Heart left ventricle (tissue), 16 donors: ENCODE measurements at regions of chr2 and their contacts with region 1.

Region 1: GRCh38 chr2:191218292-191218898 is 26.8 kb upstream of the MYO1B start:
- DNase-seq: peak in 4 of 5 donors; percentile 35 to 40 (median 40)
- ATAC-seq: peak in 3 of 4 donors; percentile 60 to 79 (median 66)
- H3K4me3 ChIP-seq: no peak overlapping the region
- H3K27ac ChIP-seq: peak overlapping the region in 2 of 12 donors; percentile 2 to 5
- H3K4me1 ChIP-seq: peaks cover 0 to 32% (median 7%) of the 10 kb centered on the region in 12 donors
- H3K27me3 ChIP-seq: no peaks in the 10 kb centered on the region
- CTCF ChIP-seq: peak; percentile 54 to 77 (median 61)
- POLR2A ChIP-seq: no peak

Region 2: GRCh38 chr2:191178806-191179514 is 39.4 kb before region 1 on chr2:
- intact Hi-C with region 1: loop called in 1 of 10 experiments (anchors 5 kb)
- DNase-seq: peak in 4 of 5 donors; percentile 10 to 68 (median 40)
- ATAC-seq: peak in 3 of 4 donors; percentile 71 to 93 (median 92)
- H3K4me3 ChIP-seq: no peak overlapping the region
- H3K27ac ChIP-seq: peak overlapping the region in 1 of 12 donors; percentile 3
- H3K4me1 ChIP-seq: peaks cover 0 to 8% (median 0%) of the 10 kb centered on the region in 12 donors
- H3K27me3 ChIP-seq: no peaks in the 10 kb centered on the region
- CTCF ChIP-seq: no peak
- POLR2A ChIP-seq: no peak

Region 3: GRCh38 chr2:191465766-191466420 is 247.5 kb after region 1 on chr2:
- intact Hi-C with region 1: no loop called
- DNase-seq: peak in 3 of 5 donors; percentile 27 to 56 (median 32)
- ATAC-seq: peak; percentile 71 to 83 (median 72)
- H3K4me3 ChIP-seq: no peak overlapping the region
- H3K27ac ChIP-seq: peak overlapping the region in 11 of 12 donors; percentile 27 to 80 (median 57)
- H3K4me1 ChIP-seq: peaks cover 0 to 37% (median 13%) of the 10 kb centered on the region in 12 donors
- H3K27me3 ChIP-seq: no peaks in the 10 kb centered on the region
- CTCF ChIP-seq: no peak
- POLR2A ChIP-seq: no peak

Region 4: DNA sequence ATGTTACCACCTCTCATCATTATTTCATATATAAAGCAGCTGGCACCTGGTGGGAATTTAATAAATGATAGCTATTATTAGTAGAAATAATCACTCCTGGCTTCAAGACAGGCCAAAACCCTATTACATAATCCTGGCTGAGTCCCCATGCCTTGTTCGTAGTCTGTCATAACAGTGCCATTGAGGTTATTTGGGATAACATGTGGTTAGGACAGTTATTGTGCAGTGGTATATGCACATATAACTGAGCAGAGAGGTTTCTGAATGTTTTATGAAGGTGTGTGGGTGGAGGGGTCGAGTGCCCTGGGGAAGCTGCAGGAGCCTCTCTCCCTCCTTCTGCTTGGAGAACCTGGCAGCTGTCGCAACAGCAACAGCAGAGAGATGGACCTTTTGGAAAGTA is 297.2 kb after region 1 on chr2:
- intact Hi-C with region 1: loop called in 5 of 10 experiments (anchors 5 kb)
- DNase-seq: no peak
- ATAC-seq: peak in 3 of 4 donors; percentile 31 to 53 (median 33)
- H3K4me3 ChIP-seq: no peak overlapping the region
- H3K27ac ChIP-seq: no peak overlapping the region
- H3K4me1 ChIP-seq: peaks cover 0 to 15% (median 0%) of the 10 kb centered on the region in 12 donors
- H3K27me3 ChIP-seq: no peaks in the 10 kb centered on the region
- CTCF ChIP-seq: no peak
- POLR2A ChIP-seq: no peak

Region 5: DNA sequence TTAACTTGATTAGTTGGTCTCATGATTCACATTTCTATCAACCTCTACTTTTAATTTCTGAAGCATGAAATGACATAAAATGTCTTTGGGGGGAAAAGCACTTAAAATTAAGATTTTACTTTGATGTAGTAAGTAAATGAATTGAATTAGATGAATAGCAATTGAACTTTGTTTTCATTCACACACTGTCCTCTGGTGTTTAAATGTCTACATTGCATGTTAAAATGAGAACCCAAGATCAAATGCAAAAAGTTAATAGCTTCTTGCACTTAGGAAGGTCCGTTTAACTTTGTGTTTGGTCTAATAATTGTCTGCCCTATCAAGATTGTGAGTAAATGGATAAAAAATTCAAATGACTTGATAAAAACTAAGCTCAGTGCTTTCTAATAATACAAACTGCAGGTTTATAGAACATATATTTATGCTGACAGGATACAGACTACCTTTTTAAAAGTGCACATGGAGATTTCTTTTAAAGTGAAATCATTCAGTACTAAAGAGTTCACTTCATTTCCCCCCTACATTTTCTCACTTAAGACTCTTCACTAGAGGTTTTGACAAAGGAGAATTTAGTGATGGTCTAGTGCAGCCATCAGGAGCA is 303.3 kb after region 1 on chr2:
- intact Hi-C with region 1: loop called in 5 of 10 experiments (anchors 5 kb)
- DNase-seq: no peak
- ATAC-seq: no peak
- H3K4me3 ChIP-seq: no peak overlapping the region
- H3K27ac ChIP-seq: no peak overlapping the region
- H3K4me1 ChIP-seq: no peaks in the 10 kb centered on the region
- H3K27me3 ChIP-seq: no peaks in the 10 kb centered on the region
- CTCF ChIP-seq: peak; percentile 72 to 93 (median 80)
- POLR2A ChIP-seq: no peak